Activated T-helper 2 cell treated with anti-CD3 and anti-CD28 coated beads, Interferon-gamma antibody, Interleukin-2, Interleukin-4, amounts not matched to agents 10 μg/mL and 5 μg/mL and 100 μg/mL, durations not matched to agents 14 hours and 24 hours and 36 hours (primary cell): ENCODE measurements at regions of chr16 and their contacts with region 1.

Region 1: DNA sequence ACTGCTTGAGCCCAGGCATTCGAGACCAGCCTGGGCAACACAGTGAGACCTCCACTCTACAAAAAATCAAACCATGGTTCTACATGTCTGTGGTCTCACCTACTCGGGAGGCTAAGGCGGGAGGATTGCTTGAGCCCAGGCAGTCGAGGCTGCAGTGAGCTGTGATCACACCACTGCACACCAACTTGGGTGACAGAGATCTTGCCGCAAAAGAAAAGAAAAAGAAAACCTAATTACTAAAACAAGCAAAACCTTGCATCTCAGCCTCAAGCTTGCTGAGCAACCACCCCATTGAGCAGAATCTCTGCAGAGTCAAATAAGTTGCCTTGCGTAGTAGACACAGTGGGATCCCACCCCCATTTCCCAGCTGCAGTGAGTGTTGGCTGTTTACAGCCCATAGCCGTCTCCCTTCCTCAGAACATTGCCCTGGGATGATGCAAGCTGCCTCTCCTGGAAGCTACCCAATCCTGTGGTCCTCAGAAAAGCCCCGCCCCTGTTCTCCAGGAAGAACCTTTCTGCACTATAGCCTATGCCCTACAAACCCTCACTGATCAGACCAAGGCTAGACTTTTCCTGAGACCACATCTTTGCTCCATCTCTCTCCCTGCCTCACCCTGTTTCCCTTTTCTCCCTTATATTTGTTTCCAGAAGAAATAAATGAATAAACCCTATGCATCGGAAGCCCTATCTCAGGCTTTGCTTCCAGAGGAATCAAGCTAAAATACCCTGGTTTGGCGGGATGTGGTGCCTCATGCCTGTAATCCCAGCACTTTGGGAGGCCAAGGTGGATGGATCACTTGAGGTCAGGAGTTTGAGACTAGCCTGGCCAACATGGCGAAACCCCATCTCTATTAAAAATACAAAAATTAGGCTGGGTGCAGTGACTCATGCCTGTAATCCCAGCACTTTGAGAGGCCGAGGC is 16.7 kb upstream of the ERN2 start:
- DNase-seq: no peak
- H3K4me3 Mint-ChIP-seq: no peak overlapping the region
- H3K27ac Mint-ChIP-seq: no peak overlapping the region
- H3K4me1 Mint-ChIP-seq: peaks cover 4% of the 10 kb centered on the region
- H3K27me3 Mint-ChIP-seq: peaks cover 4% of the 10 kb centered on the region

Region 2: GRCh38 chr16:23510164-23510914 is 219.4 kb before region 1 on chr16 and contains the start of gene GGA2:
- intact Hi-C with region 1: no loop called
- DNase-seq: peak; percentile 73
- H3K4me3 Mint-ChIP-seq: peak within 1 kb of the TSS; percentile 91
- H3K27ac Mint-ChIP-seq: peak within 1 kb of the TSS; percentile 90
- H3K4me1 Mint-ChIP-seq: peaks cover 54% of the 10 kb centered on the region
- H3K27me3 Mint-ChIP-seq: no peaks in the 10 kb centered on the region
- total RNA-seq, gene GGA2: 108 and 110 TPM in 2 replicates

Region 3: DNA sequence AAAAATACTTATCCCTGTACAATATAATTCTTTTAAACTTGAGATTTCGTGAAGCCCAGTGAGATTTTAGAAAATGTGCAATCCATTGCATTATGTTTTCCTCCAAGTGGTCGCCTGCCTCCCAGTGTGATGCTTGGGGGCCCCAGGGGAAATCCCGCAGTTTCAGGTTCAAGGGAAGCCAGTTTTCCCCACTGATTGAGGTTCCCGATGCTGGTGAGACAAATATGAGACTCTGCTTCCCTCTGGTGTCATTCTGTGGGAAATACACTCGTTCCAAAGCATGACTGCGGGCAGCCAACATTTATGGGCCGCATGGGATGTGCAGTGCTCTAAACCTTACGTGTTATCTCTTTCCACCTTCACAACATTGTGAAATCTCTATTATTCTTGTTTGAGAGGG is 306.9 kb after region 1 on chr16:
- intact Hi-C with region 1: loop called (anchors 10 kb)
- DNase-seq: no peak
- H3K4me3 Mint-ChIP-seq: no peak overlapping the region
- H3K27ac Mint-ChIP-seq: peak overlapping the region; percentile 7
- H3K4me1 Mint-ChIP-seq: peaks cover 25% of the 10 kb centered on the region
- H3K27me3 Mint-ChIP-seq: no peaks in the 10 kb centered on the region

Region 4: DNA sequence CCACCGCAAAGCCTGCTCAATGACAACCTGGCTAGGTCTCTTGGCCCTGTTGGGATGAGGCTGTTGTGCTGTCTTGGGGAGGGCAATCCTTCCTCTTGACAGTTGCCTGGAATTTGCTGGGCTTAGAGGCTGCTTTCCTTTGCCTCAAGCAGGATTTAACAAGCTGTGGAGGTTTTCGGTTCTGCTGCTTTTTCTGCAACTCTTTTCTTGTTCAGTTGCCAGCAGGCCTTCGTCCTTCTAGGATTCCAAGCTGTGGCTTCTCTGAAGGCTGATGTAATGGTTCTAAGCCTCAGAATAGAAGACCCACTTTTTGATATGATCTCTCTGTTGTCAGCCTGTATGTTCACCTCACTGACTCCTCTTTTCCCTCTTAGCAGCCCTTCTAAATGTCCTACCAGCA is 1812.5 kb after region 1 on chr16:
- intact Hi-C with region 1: no loop called
- DNase-seq: no peak
- H3K4me3 Mint-ChIP-seq: no peak overlapping the region
- H3K27ac Mint-ChIP-seq: no peak overlapping the region
- H3K4me1 Mint-ChIP-seq: no peaks in the 10 kb centered on the region
- H3K27me3 Mint-ChIP-seq: no peaks in the 10 kb centered on the region